Activated B cell treated with CpG ODN at 0.5 μM for 24 hours (primary cell): ENCODE measurements at regions of chr6 and their contacts with region 1.

Region 1: DNA sequence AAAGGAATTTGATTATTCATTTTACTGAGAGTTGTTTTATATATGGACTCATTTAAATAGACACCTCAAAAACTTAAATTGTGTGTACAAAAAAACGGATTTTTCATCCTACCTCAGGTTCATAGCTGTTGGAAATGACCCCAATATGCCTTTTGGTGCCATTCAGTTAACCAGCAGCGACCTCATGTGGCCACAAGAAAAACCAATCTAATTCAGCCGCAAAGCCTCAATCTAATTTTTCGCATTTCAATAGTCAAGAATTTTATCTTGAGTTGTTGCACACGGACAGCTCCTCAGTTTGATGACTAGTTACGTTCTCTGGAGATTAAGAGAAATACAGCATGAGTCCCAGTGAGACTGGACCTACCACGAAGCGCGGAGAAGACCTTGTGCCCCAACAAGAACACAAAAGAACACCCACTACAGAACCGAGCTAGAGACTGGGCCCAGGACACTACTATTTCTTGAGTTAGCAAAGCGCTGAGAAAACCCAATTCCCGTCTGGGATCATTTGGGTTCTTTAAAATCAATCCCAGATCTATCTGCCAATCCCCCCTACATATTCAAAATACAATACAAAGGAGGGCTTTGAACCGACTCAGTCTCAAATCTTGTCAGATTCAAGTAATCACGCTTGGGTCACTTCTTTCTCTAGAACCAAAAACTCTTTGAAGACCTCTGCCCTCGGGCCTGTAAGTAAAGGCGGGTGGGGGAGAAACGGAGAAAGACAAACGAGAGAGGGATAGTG is 1.1 kb downstream of the TCP11 start:
- DNase-seq: peak; percentile 20
- ATAC-seq: no peak
- H3K4me3 Mint-ChIP-seq: peak overlapping the region; percentile 36
- H3K27ac Mint-ChIP-seq: no peak overlapping the region
- H3K4me1 Mint-ChIP-seq: peaks cover 17% of the 10 kb centered on the region
- H3K27me3 Mint-ChIP-seq: peaks cover 13% of the 10 kb centered on the region
- CTCF ChIP-seq: peak; percentile 59

Region 2: GRCh38 chr6:34161857-34162515 is 978.1 kb before region 1 on chr6:
- CTCF ChIA-PET with region 1: interaction called, 8 read pairs
- POLR2A ChIA-PET with region 1: no interaction called
- intact Hi-C with region 1: loop called (anchors 1 kb)
- DNase-seq: peak; percentile 7
- ATAC-seq: no peak
- H3K4me3 Mint-ChIP-seq: no peak overlapping the region
- H3K27ac Mint-ChIP-seq: no peak overlapping the region
- H3K4me1 Mint-ChIP-seq: peaks cover 3% of the 10 kb centered on the region
- H3K27me3 Mint-ChIP-seq: no peaks in the 10 kb centered on the region
- CTCF ChIP-seq: no peak

Region 3: GRCh38 chr6:34610819-34611477 is 529.1 kb before region 1 on chr6:
- CTCF ChIA-PET with region 1: interaction called, 3 read pairs
- POLR2A ChIA-PET with region 1: no interaction called
- intact Hi-C with region 1: loop called (anchors 5 kb)
- DNase-seq: no peak
- ATAC-seq: no peak
- H3K4me3 Mint-ChIP-seq: no peak overlapping the region
- H3K27ac Mint-ChIP-seq: no peak overlapping the region
- H3K4me1 Mint-ChIP-seq: peaks cover 9% of the 10 kb centered on the region
- H3K27me3 Mint-ChIP-seq: no peaks in the 10 kb centered on the region
- CTCF ChIP-seq: no peak

Region 4: DNA sequence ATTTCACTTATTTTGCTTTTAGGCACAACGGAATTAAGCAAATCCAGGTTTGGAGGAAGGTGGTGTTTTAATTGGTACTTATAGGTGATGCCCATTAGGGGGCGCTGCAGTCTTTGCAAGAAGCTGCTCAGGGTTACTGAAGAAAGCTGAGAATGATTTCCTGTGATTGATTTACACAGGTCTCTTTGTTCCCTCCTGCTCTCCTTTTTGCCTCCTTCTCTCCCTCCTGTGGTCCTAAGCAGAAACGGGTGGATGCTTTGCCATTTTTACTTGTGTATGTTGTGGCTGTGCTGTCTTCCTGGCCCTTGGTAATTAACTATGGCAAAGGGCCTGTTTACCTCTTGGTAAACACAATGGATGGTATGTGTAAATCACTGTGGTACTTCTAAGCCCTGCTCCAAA is 153.2 kb before region 1 on chr6:
- CTCF ChIA-PET with region 1: interaction called, 20 read pairs
- POLR2A ChIA-PET with region 1: no interaction called
- intact Hi-C with region 1: loop called (anchors 1 kb)
- DNase-seq: no peak
- ATAC-seq: peak; percentile 31
- H3K4me3 Mint-ChIP-seq: no peak overlapping the region
- H3K27ac Mint-ChIP-seq: no peak overlapping the region
- H3K4me1 Mint-ChIP-seq: no peaks in the 10 kb centered on the region
- H3K27me3 Mint-ChIP-seq: no peaks in the 10 kb centered on the region
- CTCF ChIP-seq: peak; percentile 30

Region 5: DNA sequence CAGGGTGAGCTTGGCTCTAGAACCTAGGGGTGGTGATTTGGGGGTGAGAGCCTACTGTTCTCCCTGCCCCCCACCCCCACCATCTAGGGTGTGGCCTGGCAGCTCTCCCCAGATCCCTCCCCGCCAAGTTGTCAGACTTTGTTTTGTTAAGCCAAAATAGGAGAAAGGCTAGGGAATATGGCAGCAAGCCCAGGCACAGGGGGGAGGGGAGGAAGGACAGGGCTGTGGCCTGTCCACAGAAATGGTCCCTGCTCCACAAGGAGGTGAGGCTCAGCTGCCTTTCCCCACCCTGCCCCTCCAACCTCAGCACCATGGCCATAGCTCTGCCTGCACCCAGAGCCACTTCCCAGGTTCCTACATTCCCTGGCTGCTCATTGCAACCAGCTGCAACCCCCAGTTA is 90.9 kb after region 1 on chr6:
- CTCF ChIA-PET with region 1: no interaction called
- POLR2A ChIA-PET with region 1: no interaction called
- intact Hi-C with region 1: no loop called
- DNase-seq: no peak
- ATAC-seq: no peak
- H3K4me3 Mint-ChIP-seq: no peak overlapping the region
- H3K27ac Mint-ChIP-seq: no peak overlapping the region
- H3K4me1 Mint-ChIP-seq: no peaks in the 10 kb centered on the region
- H3K27me3 Mint-ChIP-seq: no peaks in the 10 kb centered on the region
- CTCF ChIP-seq: no peak